Activated CD4-positive, alpha-beta T cell treated with anti-CD3 and anti-CD28 coated beads, Interleukin-2, amount 10 ng/mL, durations not matched to agents 24 days and 14 days (primary cell): ENCODE measurements at regions of chr1 and their contacts with region 1.

Region 1: DNA sequence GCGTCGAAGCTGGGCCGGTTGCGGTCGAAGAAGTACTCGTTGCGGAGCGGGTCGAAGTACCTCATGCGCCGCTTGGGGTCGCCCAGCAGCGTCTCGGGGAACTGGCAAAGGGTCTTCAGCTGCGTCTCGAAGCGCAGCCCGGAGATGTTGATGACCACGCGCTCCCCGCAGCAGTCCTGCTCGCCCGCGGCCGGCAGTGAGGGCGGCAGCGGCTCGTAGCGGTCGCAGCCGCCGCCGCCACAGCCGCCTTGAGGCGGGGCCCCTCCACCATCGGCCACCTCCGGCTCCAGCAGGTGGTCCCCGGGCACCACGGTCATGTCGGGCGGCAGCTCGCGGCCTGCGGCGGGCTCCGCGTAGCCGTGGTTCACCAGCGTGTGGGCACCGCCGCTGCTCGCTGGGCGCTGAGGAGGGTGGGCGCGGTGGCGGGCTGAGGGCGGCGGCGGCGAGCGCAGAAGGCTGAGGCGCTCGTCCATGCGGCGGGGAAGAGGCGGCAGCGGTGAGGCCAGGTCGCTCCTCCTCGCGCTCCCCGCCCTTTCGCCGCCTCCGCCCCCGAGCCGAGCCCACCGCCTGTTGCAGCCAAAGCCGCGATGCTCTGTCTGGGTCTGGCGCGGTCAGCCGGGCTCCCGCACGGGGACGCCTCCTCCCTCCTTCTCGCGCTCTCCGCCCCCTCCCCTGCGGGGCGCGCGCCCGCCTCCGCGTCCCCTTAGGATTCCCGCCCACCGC is at the start of gene KCNA3:
- DNase-seq: peak; percentile 92
- H3K4me3 Mint-ChIP-seq: peak within 1 kb of the TSS; percentile 95
- H3K27ac Mint-ChIP-seq: peak within 1 kb of the TSS; percentile 94
- H3K4me1 Mint-ChIP-seq: peaks cover 50% of the 10 kb centered on the region
- H3K27me3 Mint-ChIP-seq: no peaks in the 10 kb centered on the region
- total RNA-seq, gene KCNA3: 26.9 and 29.5 TPM in 2 replicates

Region 2: GRCh38 chr1:110235834-110236682 is 438.4 kb before region 1 on chr1:
- intact Hi-C with region 1: loop called (anchors 1 kb)
- DNase-seq: no peak
- H3K4me3 Mint-ChIP-seq: peak overlapping the region; percentile 74
- H3K27ac Mint-ChIP-seq: peak overlapping the region; percentile 93
- H3K4me1 Mint-ChIP-seq: peaks cover 39% of the 10 kb centered on the region
- H3K27me3 Mint-ChIP-seq: no peaks in the 10 kb centered on the region

Region 3: GRCh38 chr1:110645821-110646735 is 28.4 kb before region 1 on chr1:
- intact Hi-C with region 1: loop called (anchors 1 kb)
- DNase-seq: peak; percentile 58
- H3K4me3 Mint-ChIP-seq: peak overlapping the region; percentile 36
- H3K27ac Mint-ChIP-seq: peak overlapping the region; percentile 71
- H3K4me1 Mint-ChIP-seq: peaks cover 45% of the 10 kb centered on the region
- H3K27me3 Mint-ChIP-seq: no peaks in the 10 kb centered on the region

Region 4: DNA sequence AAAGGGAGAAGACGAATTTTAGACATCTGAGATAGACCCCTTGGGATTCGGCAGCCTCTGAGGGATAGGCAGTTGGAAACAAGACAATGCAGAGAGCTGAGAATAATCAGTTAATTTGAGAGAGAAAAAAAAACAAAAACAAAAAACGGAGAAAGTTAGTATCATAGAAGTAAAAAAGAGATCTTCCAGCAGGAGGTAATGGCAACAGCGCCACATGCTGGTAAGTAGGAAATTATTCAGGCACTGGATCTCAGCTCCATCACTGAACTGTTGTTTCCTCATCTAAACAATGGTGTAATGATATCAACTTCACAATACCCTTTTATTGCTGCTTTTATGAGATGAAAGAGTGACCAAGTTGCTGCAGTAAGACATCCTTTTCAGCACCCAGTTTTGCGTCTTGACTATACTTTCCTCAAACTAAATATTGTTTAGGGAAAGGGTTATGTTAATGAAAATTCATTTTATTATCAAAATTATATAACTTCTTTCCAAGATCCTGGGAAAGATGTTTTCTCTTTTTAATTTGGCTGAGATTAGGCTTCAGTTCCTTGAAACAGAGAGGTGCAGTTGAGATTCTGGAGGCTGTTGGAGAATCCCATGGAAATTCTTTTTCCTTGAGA is 91.6 kb after region 1 on chr1:
- intact Hi-C with region 1: loop called (anchors 5 kb)
- DNase-seq: peak; percentile 86
- H3K4me3 Mint-ChIP-seq: peak overlapping the region; percentile 2
- H3K27ac Mint-ChIP-seq: no peak overlapping the region
- H3K4me1 Mint-ChIP-seq: peaks cover 9% of the 10 kb centered on the region
- H3K27me3 Mint-ChIP-seq: peaks cover 33% of the 10 kb centered on the region

Region 5: GRCh38 chr1:110811529-110811928 is 137.0 kb after region 1 on chr1:
- intact Hi-C with region 1: no loop called
- DNase-seq: no peak
- H3K4me3 Mint-ChIP-seq: no peak overlapping the region
- H3K27ac Mint-ChIP-seq: no peak overlapping the region
- H3K4me1 Mint-ChIP-seq: no peaks in the 10 kb centered on the region
- H3K27me3 Mint-ChIP-seq: peaks cover 54% of the 10 kb centered on the region

Region 6: GRCh38 chr1:110880708-110881374 is 206.3 kb after region 1 on chr1:
- intact Hi-C with region 1: no loop called
- DNase-seq: peak; percentile 85
- H3K4me3 Mint-ChIP-seq: peak overlapping the region; percentile 84
- H3K27ac Mint-ChIP-seq: peak overlapping the region; percentile 99
- H3K4me1 Mint-ChIP-seq: peaks cover 62% of the 10 kb centered on the region
- H3K27me3 Mint-ChIP-seq: no peaks in the 10 kb centered on the region

Region 7: GRCh38 chr1:111203681-111204200 is 529.2 kb after region 1 on chr1:
- intact Hi-C with region 1: loop called (anchors 5 kb)
- DNase-seq: peak; percentile 96
- H3K4me3 Mint-ChIP-seq: peak overlapping the region; percentile 98
- H3K27ac Mint-ChIP-seq: peak overlapping the region; percentile 82
- H3K4me1 Mint-ChIP-seq: peaks cover 55% of the 10 kb centered on the region
- H3K27me3 Mint-ChIP-seq: no peaks in the 10 kb centered on the region